Activated T-helper 1 cell treated with anti-CD3 and anti-CD28 coated beads, Interleukin-12 subunit alpha, Interleukin-12 subunit beta, Interleukin-2, Interleukin-4 antibody, amounts not matched to agents 30 ng/mL and 10 ng/mL and 1 ng/mL, durations not matched to agents 14 hours and 24 hours and 36 hours (primary cell): ENCODE measurements at regions of chr10 and their contacts with region 1.

Region 1: DNA sequence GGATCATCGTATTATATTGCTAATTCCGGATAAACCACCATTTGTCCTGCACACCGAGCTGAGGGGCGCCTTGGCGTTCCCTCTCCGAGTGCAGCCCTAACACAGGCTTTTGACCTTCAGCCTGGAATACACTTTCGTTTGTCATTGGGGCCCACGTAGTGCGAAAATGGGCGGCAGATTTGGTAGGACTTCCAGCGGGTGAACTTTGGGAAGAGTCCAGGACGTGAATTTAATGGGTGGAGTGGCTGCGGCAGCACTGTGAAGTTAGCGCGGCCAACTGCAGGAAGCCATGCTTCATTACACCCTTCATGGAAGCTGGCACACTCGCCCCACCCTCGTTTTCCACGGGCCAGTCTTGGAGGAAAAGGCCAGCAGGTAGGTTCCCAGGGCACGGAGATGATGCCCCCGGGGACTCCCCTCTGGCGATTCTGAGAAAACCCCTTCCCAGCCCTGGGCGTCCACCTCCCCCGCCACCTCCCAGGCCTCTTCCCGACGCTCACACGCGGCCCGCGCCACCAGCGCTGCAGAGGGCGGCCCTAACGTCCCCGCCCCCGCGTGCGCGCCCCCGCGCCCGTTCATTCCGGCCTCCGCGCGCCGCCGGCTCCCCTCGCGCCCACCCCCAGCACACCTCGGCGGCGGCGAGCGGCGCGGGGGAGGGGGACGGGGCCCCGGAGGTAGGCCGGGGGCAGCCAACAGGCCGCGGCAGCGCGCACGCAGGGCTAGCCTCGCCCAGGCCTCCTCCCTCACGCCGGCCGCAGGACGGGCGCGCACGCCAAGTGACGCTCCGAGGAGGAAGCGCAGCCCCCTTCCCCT is at the start of gene MLLT10:
- DNase-seq: peak; percentile 89
- H3K4me3 Mint-ChIP-seq: peak within 1 kb of the TSS; percentile 90
- H3K27ac Mint-ChIP-seq: peak within 1 kb of the TSS; percentile 90
- H3K4me1 Mint-ChIP-seq: peaks cover 17% of the 10 kb centered on the region
- H3K27me3 Mint-ChIP-seq: peaks cover 16% of the 10 kb centered on the region
- total RNA-seq, gene MLLT10: 40.9 and 43.1 TPM in 2 replicates

Region 2: GRCh38 chr10:21488246-21488956 is 45.3 kb before region 1 on chr10:
- intact Hi-C with region 1: no loop called
- DNase-seq: no peak
- H3K4me3 Mint-ChIP-seq: no peak overlapping the region
- H3K27ac Mint-ChIP-seq: no peak overlapping the region
- H3K4me1 Mint-ChIP-seq: no peaks in the 10 kb centered on the region
- H3K27me3 Mint-ChIP-seq: peaks cover 41% of the 10 kb centered on the region

Region 3: GRCh38 chr10:21584834-21585530 is 51.3 kb after region 1 on chr10:
- intact Hi-C with region 1: loop called (anchors 1 kb)
- DNase-seq: no peak
- H3K4me3 Mint-ChIP-seq: no peak overlapping the region
- H3K27ac Mint-ChIP-seq: no peak overlapping the region
- H3K4me1 Mint-ChIP-seq: peaks cover 34% of the 10 kb centered on the region
- H3K27me3 Mint-ChIP-seq: no peaks in the 10 kb centered on the region

Region 4: GRCh38 chr10:21953585-21954057 is 419.9 kb after region 1 on chr10:
- intact Hi-C with region 1: loop called (anchors 1 kb)
- DNase-seq: no peak
- H3K4me3 Mint-ChIP-seq: no peak overlapping the region
- H3K27ac Mint-ChIP-seq: no peak overlapping the region
- H3K4me1 Mint-ChIP-seq: peaks cover 6% of the 10 kb centered on the region
- H3K27me3 Mint-ChIP-seq: peaks cover 2% of the 10 kb centered on the region

Region 5: GRCh38 chr10:22251751-22252223 is 718.1 kb after region 1 on chr10:
- intact Hi-C with region 1: loop called (anchors 5 kb)
- DNase-seq: peak; percentile 58
- H3K4me3 Mint-ChIP-seq: peak overlapping the region; percentile 88
- H3K27ac Mint-ChIP-seq: peak overlapping the region; percentile 98
- H3K4me1 Mint-ChIP-seq: peaks cover 44% of the 10 kb centered on the region
- H3K27me3 Mint-ChIP-seq: peaks cover 18% of the 10 kb centered on the region

Region 6: GRCh38 chr10:22436884-22437619 is 903.4 kb after region 1 on chr10:
- intact Hi-C with region 1: loop called (anchors 2 kb)
- DNase-seq: peak; percentile 80
- H3K4me3 Mint-ChIP-seq: peak overlapping the region; percentile 91
- H3K27ac Mint-ChIP-seq: peak overlapping the region; percentile 96
- H3K4me1 Mint-ChIP-seq: peaks cover 49% of the 10 kb centered on the region
- H3K27me3 Mint-ChIP-seq: peaks cover 9% of the 10 kb centered on the region